ENCODE measurements at regions of chr5 and their contacts with region 1.

Region 1: GRCh38 chr5:40652441-40653220 is 27.1 kb upstream of the PTGER4 start:
- DNase-seq: peak in 2 of 5 donors; percentile 19 to 30
- H3K4me3 ChIP-seq: no peak overlapping the region
- H3K4me3 Mint-ChIP-seq: peak overlapping the region; percentile 63 to 90 (median 84)
- H3K27ac ChIP-seq: peak overlapping the region; percentile 55
- H3K27ac Mint-ChIP-seq: peak overlapping the region; percentile 84 to 97 (median 93)
- H3K4me1 ChIP-seq: peaks cover 82% of the 10 kb centered on the region
- H3K4me1 Mint-ChIP-seq: peaks cover 53 to 89% (median 73%) of the 10 kb centered on the region in 4 donors
- H3K27me3 ChIP-seq: no peaks in the 10 kb centered on the region
- H3K27me3 Mint-ChIP-seq: no peaks in the 10 kb centered on the region

Region 2: GRCh38 chr5:40502736-40503135 is 149.9 kb before region 1 on chr5:
- CTCF ChIA-PET with region 1: interaction called, 3 read pairs
- POLR2A ChIA-PET with region 1: no interaction called
- intact Hi-C with region 1: loop called (anchors 1 kb)
- DNase-seq: no peak
- H3K4me3 ChIP-seq: no peak overlapping the region
- H3K4me3 Mint-ChIP-seq: no peak overlapping the region
- H3K27ac ChIP-seq: no peak overlapping the region
- H3K27ac Mint-ChIP-seq: no peak overlapping the region
- H3K4me1 ChIP-seq: peaks cover 6% of the 10 kb centered on the region
- H3K4me1 Mint-ChIP-seq: peaks cover 4 to 12% (median 6%) of the 10 kb centered on the region in 4 donors
- H3K27me3 ChIP-seq: no peaks in the 10 kb centered on the region
- H3K27me3 Mint-ChIP-seq: no peaks in the 10 kb centered on the region

Region 3: DNA sequence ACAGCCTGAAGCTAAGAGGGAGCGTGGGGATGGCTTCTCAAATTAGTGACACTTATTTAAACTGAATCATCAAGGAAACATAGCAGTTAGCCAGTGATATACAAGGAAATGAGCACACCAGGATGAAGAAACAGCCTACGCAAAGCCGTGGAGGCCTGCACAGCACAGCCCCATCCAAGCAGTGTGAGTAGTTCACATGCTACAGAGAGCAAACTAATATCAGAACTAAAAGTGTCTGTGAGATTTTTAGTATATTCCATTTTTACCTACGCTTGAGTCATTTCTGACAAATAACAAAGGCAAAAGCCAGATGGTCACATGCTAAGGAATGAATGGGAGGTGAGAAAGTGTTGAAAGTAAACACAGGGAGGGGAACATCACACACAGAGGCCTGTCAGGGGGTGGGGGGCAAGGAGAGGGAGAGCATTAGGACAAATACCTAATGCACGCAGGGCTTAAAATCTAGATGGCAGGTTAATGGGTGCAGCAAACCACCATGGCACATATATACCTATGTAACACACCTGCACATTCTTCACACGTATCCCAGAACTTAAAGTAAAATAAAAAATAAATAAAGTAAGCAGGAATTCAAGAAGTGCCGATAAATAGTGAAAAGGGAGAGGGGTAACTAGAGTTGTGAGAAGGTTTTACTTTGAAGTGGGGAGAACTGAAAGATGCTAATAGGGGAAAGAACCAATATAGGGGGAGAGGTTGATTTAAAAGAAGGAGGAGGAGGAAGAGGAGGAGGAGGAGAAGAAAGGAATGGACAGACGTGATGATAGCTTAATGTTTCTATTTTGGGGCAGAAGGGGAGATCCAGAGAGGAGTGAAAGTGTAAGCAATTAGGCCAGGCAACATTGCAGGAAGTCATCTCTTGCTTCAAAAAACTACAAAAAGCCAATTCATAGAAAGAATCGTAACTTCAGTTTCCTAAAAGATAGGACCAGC is 73.9 kb before region 1 on chr5:
- CTCF ChIA-PET with region 1: no interaction called
- POLR2A ChIA-PET with region 1: no interaction called
- intact Hi-C with region 1: loop called (anchors 2 kb)
- DNase-seq: peak in 2 of 5 donors; percentile 2 to 5
- H3K4me3 ChIP-seq: no peak overlapping the region
- H3K4me3 Mint-ChIP-seq: peak overlapping the region; percentile 70 to 87 (median 82)
- H3K27ac ChIP-seq: no peak overlapping the region
- H3K27ac Mint-ChIP-seq: peak overlapping the region in 6 of 7 donors; percentile 25 to 90 (median 67)
- H3K4me1 ChIP-seq: peaks cover 13% of the 10 kb centered on the region
- H3K4me1 Mint-ChIP-seq: peaks cover 15 to 23% (median 17%) of the 10 kb centered on the region in 4 donors
- H3K27me3 ChIP-seq: no peaks in the 10 kb centered on the region
- H3K27me3 Mint-ChIP-seq: peaks cover 0 to 2% of the 10 kb centered on the region in 2 donors

Region 4: GRCh38 chr5:40623480-40624420 is 28.9 kb before region 1 on chr5:
- CTCF ChIA-PET with region 1: interaction called, 4 read pairs
- POLR2A ChIA-PET with region 1: interaction called, 12 read pairs
- intact Hi-C with region 1: no loop called
- DNase-seq: peak; percentile 60 to 67 (median 64)
- H3K4me3 ChIP-seq: no peak overlapping the region
- H3K4me3 Mint-ChIP-seq: peak overlapping the region in 7 of 8 donors; percentile 0 to 65 (median 49)
- H3K27ac ChIP-seq: no peak overlapping the region
- H3K27ac Mint-ChIP-seq: peak overlapping the region; percentile 68 to 96 (median 85)
- H3K4me1 ChIP-seq: peaks cover 29% of the 10 kb centered on the region
- H3K4me1 Mint-ChIP-seq: peaks cover 40 to 57% (median 46%) of the 10 kb centered on the region in 4 donors
- H3K27me3 ChIP-seq: no peaks in the 10 kb centered on the region
- H3K27me3 Mint-ChIP-seq: no peaks in the 10 kb centered on the region

Region 5: GRCh38 chr5:40672425-40672824 is 19.8 kb after region 1 on chr5:
- CTCF ChIA-PET with region 1: interaction called, 5 read pairs
- POLR2A ChIA-PET with region 1: interaction called, 158 read pairs
- intact Hi-C with region 1: loop called (anchors 2 kb)
- DNase-seq: no peak
- H3K4me3 ChIP-seq: no peak overlapping the region
- H3K4me3 Mint-ChIP-seq: peak overlapping the region in 2 of 8 donors; percentile 18 to 32
- H3K27ac ChIP-seq: no peak overlapping the region
- H3K27ac Mint-ChIP-seq: peak overlapping the region; percentile 4 to 98 (median 62)
- H3K4me1 ChIP-seq: peaks cover 83% of the 10 kb centered on the region
- H3K4me1 Mint-ChIP-seq: peaks cover 59 to 85% (median 74%) of the 10 kb centered on the region in 4 donors
- H3K27me3 ChIP-seq: no peaks in the 10 kb centered on the region
- H3K27me3 Mint-ChIP-seq: no peaks in the 10 kb centered on the region

Region 6: DNA sequence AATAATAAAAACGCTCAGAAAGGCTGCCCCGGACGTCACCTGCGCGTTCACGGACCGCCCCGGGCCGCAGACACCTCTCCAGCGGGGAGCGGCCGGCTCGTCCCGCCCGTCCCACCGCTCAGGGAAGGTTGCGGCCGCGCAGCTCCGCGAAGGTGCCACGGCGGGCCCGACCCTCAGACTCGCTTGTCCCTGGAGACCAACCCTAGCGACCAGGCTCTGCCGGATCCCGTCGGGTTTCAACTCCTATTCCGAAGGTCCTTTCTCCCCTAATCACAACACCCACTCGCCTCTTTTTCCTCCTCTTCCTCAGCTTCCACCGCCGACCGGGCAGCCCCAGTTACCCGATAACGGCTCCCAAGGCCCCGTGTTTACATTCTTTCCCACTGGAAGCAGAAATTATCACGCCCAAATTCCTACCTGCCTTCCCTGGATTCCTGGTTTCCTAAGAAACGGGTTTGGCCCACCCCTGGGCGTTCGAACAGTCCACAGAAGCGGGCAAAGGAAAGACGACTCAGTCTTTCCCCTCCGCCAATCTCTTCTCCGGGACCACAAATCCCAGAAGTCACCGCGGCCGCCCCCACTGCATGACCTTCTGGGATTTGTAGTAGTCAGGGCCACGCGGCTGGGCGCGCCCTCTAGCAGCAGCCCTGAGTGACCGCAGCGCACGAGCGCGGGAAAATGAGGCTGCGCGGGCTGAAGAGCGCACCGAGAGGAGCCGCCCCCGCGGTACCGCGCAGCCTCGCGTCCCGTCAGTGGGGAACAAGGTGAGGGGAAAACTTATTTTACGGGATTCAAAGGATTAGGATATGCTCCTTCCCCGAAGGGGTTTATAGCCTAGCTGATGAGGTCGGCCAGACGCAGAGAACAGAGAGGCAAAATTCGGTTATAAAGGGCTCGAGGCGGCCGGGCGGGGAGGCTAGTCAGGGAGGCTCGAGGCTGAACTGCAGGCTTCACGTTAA is 103.1 kb after region 1 on chr5 and contains the start of gene TTC33:
- CTCF ChIA-PET with region 1: no interaction called
- POLR2A ChIA-PET with region 1: no interaction called
- intact Hi-C with region 1: no loop called
- DNase-seq: peak; percentile 90 to 97 (median 92)
- H3K4me3 ChIP-seq: peak within 1 kb of the TSS; percentile 93 to 95
- H3K4me3 Mint-ChIP-seq: no peak within 1 kb of the TSS
- H3K27ac ChIP-seq: peak within 1 kb of the TSS; percentile 90
- H3K27ac Mint-ChIP-seq: peak within 1 kb of the TSS in 1 of 7 donors; percentile 68
- H3K4me1 ChIP-seq: peaks cover 21% of the 10 kb centered on the region
- H3K4me1 Mint-ChIP-seq: peaks cover 8 to 29% (median 16%) of the 10 kb centered on the region in 4 donors
- H3K27me3 ChIP-seq: no peaks in the 10 kb centered on the region
- H3K27me3 Mint-ChIP-seq: no peaks in the 10 kb centered on the region
- total RNA-seq, gene TTC33: 15.2 to 16.2 TPM